CD14-positive monocyte (primary cell): ENCODE measurements at regions of chr18 and their contacts with region 1.

Region 1: DNA sequence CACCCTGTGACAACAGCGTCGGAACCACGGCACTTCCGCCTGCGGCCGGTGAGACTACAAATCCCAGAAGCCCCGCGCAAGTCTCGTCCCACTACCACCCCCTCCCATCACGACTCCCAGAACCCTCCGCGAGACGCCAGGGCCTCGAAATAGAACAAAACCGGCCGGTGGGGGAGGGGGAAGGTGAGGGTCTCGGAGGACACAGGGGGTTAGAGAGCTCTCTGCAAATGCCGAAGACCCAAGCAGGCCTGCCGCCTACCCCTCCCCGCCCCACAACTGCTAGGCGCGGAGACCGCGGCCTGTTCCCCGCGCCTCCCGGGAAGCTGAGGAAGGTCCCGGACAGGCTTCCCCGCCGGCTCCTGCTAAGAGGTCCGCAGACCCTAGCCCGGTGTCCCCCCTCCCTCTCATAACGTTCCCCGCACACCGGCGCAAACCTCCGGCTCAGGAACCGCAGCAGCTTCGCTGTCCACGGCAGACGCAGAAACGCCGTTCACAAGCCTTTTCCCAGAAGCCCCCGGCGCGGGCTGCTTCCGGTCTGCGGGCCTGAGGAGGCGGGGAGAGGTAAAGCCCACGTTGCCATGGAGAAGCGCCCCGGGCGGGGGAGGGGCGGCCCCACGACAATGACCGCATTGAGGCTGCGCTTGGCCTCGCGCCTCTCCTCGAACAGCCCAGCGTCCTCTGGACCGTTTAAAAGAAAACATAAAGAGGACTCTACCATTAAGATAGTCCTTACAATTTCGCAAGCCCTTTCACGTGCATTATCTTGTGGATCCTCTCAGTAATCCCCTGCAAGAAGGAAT is at the start of gene ZNF24:
- DNase-seq: peak; percentile 91 to 94 (median 93)
- H3K4me3 ChIP-seq: peak within 1 kb of the TSS; percentile 74 to 87 (median 84)
- H3K4me3 Mint-ChIP-seq: peak within 1 kb of the TSS; percentile 91 to 92
- H3K27ac ChIP-seq: peak within 1 kb of the TSS; percentile 96 to 98
- H3K27ac Mint-ChIP-seq: peak within 1 kb of the TSS; percentile 92 to 99 (median 98)
- H3K4me1 ChIP-seq: peaks cover 29 to 37% of the 10 kb centered on the region in 2 donors
- H3K4me1 Mint-ChIP-seq: peaks cover 46% of the 10 kb centered on the region
- H3K27me3 ChIP-seq: no peaks in the 10 kb centered on the region
- H3K27me3 Mint-ChIP-seq: peaks cover 0 to 1% (median 0%) of the 10 kb centered on the region in 3 donors
- CTCF ChIP-seq: no peak
- polyA plus RNA-seq, gene ZNF24: 12.9 to 64.4 (median 54.3) TPM

Region 2: DNA sequence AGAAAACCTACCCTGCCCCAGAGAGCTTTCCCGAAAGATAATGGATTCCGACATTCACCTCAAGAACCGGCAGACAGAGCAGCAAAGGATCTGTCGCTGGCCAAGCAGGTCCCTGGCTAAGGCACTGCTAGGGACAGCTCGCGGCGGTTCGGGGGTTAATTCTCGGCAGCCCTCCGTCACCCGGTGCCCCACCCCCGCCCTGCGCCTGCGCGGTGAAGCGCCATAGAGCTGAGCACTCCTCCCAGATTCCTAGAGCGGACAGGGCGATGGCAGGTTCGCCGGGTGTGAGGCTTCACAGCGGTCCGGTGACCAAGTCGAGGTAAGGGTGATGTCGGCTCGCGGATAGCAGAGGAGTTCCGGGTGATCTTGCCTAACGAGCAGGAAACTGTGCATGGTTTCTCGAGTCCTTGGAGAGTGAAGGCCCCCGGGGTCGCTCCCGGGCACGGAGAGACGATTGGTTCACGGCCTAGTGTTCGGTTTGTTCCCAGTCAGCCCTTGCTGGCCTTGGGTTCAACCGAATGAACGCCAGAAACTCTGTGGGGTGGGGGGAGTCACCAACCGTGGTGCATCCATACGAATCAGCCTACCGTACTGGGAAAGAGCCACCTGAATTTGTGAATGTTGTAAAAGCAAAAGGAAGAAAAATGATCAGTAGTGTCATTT is 53.9 kb before region 1 on chr18 and contains the start of gene ZSCAN30:
- intact Hi-C with region 1: loop called (anchors 2 to 5 kb)
- DNase-seq: peak; percentile 90 to 96 (median 93)
- H3K4me3 ChIP-seq: peak within 1 kb of the TSS; percentile 86 to 99 (median 96)
- H3K4me3 Mint-ChIP-seq: peak within 1 kb of the TSS; percentile 97 to 99
- H3K27ac ChIP-seq: peak within 1 kb of the TSS; percentile 66 to 89
- H3K27ac Mint-ChIP-seq: peak within 1 kb of the TSS; percentile 95 to 99 (median 97)
- H3K4me1 ChIP-seq: peaks cover 21 to 22% of the 10 kb centered on the region in 2 donors
- H3K4me1 Mint-ChIP-seq: peaks cover 29% of the 10 kb centered on the region
- H3K27me3 ChIP-seq: no peaks in the 10 kb centered on the region
- H3K27me3 Mint-ChIP-seq: peaks cover 0 to 4% (median 2%) of the 10 kb centered on the region in 3 donors
- CTCF ChIP-seq: no peak
- polyA plus RNA-seq, gene ZSCAN30: 1.3 to 3.2 (median 1.7) TPM

Region 3: DNA sequence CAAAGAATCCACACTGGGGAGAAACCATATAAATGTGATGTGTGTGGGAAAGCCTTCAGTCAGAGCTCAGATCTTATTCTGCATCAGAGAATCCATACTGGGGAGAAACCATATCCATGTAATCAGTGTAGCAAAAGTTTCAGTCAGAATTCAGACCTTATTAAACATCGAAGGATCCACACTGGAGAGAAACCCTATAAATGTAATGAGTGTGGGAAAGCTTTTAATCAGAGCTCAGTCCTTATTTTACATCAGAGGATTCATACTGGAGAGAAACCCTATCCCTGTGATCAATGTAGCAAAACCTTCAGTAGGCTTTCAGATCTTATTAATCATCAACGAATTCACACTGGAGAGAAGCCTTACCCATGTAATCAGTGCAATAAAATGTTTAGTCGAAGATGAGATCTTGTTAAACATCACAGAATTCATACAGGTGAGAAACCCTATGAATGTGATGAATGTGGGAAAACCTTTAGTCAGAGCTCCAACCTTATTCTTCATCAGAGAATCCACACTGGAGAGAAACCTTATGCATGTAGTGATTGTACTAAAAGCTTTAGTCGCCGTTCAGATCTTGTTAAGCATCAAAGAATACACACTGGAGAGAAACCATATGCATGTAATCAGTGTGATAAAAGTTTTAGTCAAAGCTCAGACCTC is 37.4 kb before region 1 on chr18:
- intact Hi-C with region 1: no loop called
- DNase-seq: no peak
- H3K4me3 ChIP-seq: peak overlapping the region in 1 of 3 experiments; percentile 32
- H3K4me3 Mint-ChIP-seq: no peak overlapping the region
- H3K27ac ChIP-seq: no peak overlapping the region
- H3K27ac Mint-ChIP-seq: no peak overlapping the region
- H3K4me1 ChIP-seq: no peaks in the 10 kb centered on the region
- H3K4me1 Mint-ChIP-seq: no peaks in the 10 kb centered on the region
- H3K27me3 ChIP-seq: no peaks in the 10 kb centered on the region
- H3K27me3 Mint-ChIP-seq: no peaks in the 10 kb centered on the region
- CTCF ChIP-seq: no peak

Region 4: DNA sequence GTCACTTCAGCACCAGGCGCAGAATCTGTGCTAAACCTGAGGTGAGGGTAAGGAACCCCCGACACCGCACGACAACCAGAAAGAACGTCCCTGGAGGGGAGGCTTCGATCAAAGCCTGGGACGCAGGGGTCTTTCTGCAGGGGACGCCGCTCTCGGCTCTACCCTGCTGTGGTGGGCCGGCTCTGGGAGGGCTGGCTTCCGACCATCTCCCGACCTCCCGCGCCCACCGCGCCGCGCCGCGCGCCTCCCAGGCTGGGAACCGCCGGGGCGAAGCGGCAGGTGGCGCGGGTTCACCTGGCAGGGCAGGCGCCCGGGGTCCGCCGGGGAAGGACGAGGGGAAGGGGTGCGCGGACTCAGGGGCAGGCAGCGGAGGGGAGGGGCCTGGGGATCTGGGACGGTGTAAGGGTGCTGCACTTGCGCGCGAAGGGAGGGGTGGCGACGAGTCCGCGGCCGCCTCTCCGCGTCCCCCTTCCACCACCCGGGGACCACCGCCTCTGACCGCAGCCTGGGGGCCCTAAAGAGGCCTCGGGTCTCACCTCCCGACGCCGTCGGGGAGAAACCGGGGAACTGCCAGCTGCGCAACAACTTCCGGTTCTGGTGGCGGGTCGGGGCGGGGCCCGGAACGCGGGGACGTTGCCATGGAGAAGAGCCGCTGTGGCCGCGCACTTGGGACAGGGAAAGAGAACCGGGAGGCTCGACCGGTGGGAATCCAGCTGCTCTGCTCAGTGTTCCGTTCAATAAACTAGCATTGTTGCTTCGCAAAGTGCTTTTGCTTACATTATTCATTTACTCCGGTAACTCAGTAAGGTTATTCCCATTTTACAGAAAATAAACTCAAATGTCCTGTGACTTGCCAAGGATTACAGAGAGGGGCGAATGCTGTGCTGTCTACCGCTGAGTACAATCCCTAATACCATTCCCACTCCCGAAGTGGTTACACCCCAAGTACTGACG is 32.9 kb after region 1 on chr18 and contains the start of gene ZNF396:
- intact Hi-C with region 1: loop called in 1 of 2 experiments (anchors 2 kb)
- DNase-seq: peak; percentile 73 to 90 (median 83)
- H3K4me3 ChIP-seq: peak within 1 kb of the TSS; percentile 60 to 88 (median 81)
- H3K4me3 Mint-ChIP-seq: peak within 1 kb of the TSS; percentile 84 to 87
- H3K27ac ChIP-seq: peak within 1 kb of the TSS in 1 of 2 donors; percentile 85
- H3K27ac Mint-ChIP-seq: peak within 1 kb of the TSS; percentile 65 to 90 (median 80)
- H3K4me1 ChIP-seq: peaks cover 11 to 16% of the 10 kb centered on the region in 2 donors
- H3K4me1 Mint-ChIP-seq: peaks cover 17% of the 10 kb centered on the region
- H3K27me3 ChIP-seq: no peaks in the 10 kb centered on the region
- H3K27me3 Mint-ChIP-seq: peaks cover 3 to 5% (median 4%) of the 10 kb centered on the region in 3 donors
- CTCF ChIP-seq: no peak
- polyA plus RNA-seq, gene ZNF396: 1.0 to 1.9 (median 1.1) TPM